Common myeloid progenitor, CD34-positive (primary cell): ENCODE measurements at regions of chr6 and their contacts with region 1.

Region 1: GRCh38 chr6:132715204-132715603 is 1.3 kb upstream of the VNN1 start:
- DNase-seq: no peak
- H3K4me3 ChIP-seq: peak overlapping the region in 1 of 7 experiments; percentile 26
- H3K27ac ChIP-seq: peak overlapping the region in 1 of 2 experiments; percentile 31
- H3K4me1 ChIP-seq: peaks cover 19 to 49% (median 31%) of the 10 kb centered on the region in 4 experiments
- H3K27me3 ChIP-seq: no peaks in the 10 kb centered on the region

Region 2: DNA sequence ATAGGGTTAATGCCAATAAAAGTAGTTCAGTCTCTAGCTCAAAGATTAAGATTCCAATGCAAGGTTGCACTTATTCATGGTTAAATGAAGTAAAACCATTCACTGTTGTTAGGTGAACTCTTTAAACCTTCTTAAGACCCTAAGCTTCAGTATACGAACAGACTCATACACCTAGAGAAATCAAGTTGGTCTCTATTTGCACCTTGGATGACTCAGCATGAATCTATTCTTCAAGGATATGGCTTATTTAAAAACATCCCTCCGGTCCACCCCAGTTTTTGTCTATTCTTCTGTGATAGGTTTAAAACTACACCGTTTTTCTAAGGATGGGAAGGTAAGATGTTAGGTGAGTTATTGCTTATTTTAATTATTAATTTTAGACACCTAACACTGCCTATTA is 178.1 kb before region 1 on chr6:
- CTCF ChIA-PET with region 1: no interaction called
- POLR2A ChIA-PET with region 1: no interaction called
- DNase-seq: no peak
- H3K4me3 ChIP-seq: no peak overlapping the region
- H3K27ac ChIP-seq: no peak overlapping the region
- H3K4me1 ChIP-seq: no peaks in the 10 kb centered on the region
- H3K27me3 ChIP-seq: peaks cover 0 to 2% (median 2%) of the 10 kb centered on the region in 5 experiments

Region 3: GRCh38 chr6:132659082-132659481 is 56.1 kb before region 1 on chr6 and contains the start of gene TAAR1:
- CTCF ChIA-PET with region 1: no interaction called
- POLR2A ChIA-PET with region 1: no interaction called
- DNase-seq: no peak
- H3K4me3 ChIP-seq: no peak within 1 kb of the TSS
- H3K27ac ChIP-seq: no peak within 1 kb of the TSS
- H3K4me1 ChIP-seq: no peaks in the 10 kb centered on the region
- H3K27me3 ChIP-seq: no peaks in the 10 kb centered on the region

Region 4: DNA sequence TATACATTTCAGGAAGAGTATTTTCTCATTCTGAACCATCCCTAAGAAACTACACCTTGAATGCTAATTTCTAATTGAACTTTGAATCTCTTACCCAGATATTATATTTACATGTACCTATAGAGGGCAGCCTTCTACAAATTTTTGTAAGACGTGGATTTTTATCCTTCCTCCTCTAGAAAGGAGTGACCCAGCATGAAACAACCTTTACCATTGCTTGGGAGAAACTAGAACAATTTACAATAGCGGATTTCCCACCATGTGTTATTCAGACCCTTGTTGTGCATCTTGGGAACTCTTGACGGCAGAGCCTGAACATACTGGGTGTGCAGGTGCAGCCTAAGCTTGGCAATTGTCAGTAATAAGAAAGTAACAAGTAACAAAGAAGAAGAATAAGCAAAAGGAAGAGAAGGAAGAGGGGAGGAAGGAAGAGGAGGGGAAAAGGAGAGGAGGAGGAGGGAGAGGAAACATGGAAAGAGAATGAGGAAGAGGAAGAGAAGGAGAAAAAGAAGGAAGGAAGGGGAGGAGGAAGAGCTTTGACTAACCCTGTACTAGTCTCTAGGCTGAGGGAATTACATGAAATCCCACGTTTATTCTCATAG is 45.4 kb before region 1 on chr6:
- CTCF ChIA-PET with region 1: interaction called, 10 read pairs
- POLR2A ChIA-PET with region 1: no interaction called
- DNase-seq: peak; percentile 50 to 71 (median 68)
- H3K4me3 ChIP-seq: peak overlapping the region in 3 of 7 experiments; percentile 33 to 54 (median 42)
- H3K27ac ChIP-seq: no peak overlapping the region
- H3K4me1 ChIP-seq: peaks cover 0 to 4% (median 3%) of the 10 kb centered on the region in 4 experiments
- H3K27me3 ChIP-seq: no peaks in the 10 kb centered on the region

Region 5: GRCh38 chr6:132725947-132726607 is 10.9 kb after region 1 on chr6:
- CTCF ChIA-PET with region 1: interaction called, 11 read pairs
- POLR2A ChIA-PET with region 1: no interaction called
- DNase-seq: no peak
- H3K4me3 ChIP-seq: no peak overlapping the region
- H3K27ac ChIP-seq: no peak overlapping the region
- H3K4me1 ChIP-seq: peaks cover 0 to 16% (median 1%) of the 10 kb centered on the region in 4 experiments
- H3K27me3 ChIP-seq: no peaks in the 10 kb centered on the region

Region 6: GRCh38 chr6:132734694-132735635 is 19.8 kb after region 1 on chr6:
- CTCF ChIA-PET with region 1: interaction called, 11 read pairs
- POLR2A ChIA-PET with region 1: no interaction called
- DNase-seq: peak in 2 of 3 donors; percentile 38 to 45
- H3K4me3 ChIP-seq: peak overlapping the region in 1 of 7 experiments; percentile 58
- H3K27ac ChIP-seq: no peak overlapping the region
- H3K4me1 ChIP-seq: peaks cover 0 to 16% (median 3%) of the 10 kb centered on the region in 4 experiments
- H3K27me3 ChIP-seq: no peaks in the 10 kb centered on the region

Region 7: GRCh38 chr6:132768051-132768517 is 52.9 kb after region 1 on chr6:
- CTCF ChIA-PET with region 1: interaction called, 12 read pairs
- POLR2A ChIA-PET with region 1: no interaction called
- DNase-seq: peak; percentile 74 to 83 (median 82)
- H3K4me3 ChIP-seq: peak overlapping the region; percentile 30 to 88 (median 60)
- H3K27ac ChIP-seq: no peak overlapping the region
- H3K4me1 ChIP-seq: peaks cover 0 to 14% (median 3%) of the 10 kb centered on the region in 4 experiments
- H3K27me3 ChIP-seq: no peaks in the 10 kb centered on the region